ENCODE measurements at regions of chr14 and their contacts with region 1.

Region 1: GRCh38 chr14:99235582-99236320 is 36.2 kb downstream of the BCL11B start:
- DNase-seq: no peak
- ATAC-seq: no peak
- H3K4me3 Mint-ChIP-seq: peak overlapping the region; percentile 67
- H3K27ac Mint-ChIP-seq: peak overlapping the region; percentile 93
- H3K4me1 Mint-ChIP-seq: peaks cover 93% of the 10 kb centered on the region
- H3K27me3 Mint-ChIP-seq: no peaks in the 10 kb centered on the region

Region 2: DNA sequence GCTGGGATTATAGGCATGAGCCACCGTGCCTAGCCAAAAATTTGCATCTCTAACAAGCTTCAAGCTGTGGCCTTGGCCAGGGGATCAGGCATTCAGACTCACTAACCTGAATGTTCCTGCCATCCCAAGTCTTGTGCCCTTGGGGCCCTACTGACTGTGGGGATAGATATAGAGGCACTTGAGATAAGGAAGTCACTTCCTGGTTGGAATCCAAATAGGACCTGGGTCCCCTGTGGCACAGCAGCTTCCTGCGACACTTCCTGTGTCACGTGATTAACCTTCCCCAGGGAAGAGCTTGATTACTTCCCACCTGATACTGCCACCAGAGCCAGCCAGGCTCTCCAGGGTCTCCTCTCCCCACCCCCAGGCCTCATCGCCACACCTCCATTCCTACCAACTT is 92.0 kb before region 1 on chr14:
- CTCF ChIA-PET with region 1: no interaction called
- POLR2A ChIA-PET with region 1: no interaction called
- intact Hi-C with region 1: no loop called
- DNase-seq: no peak
- ATAC-seq: no peak
- H3K4me3 Mint-ChIP-seq: no peak overlapping the region
- H3K27ac Mint-ChIP-seq: no peak overlapping the region
- H3K4me1 Mint-ChIP-seq: peaks cover 5% of the 10 kb centered on the region
- H3K27me3 Mint-ChIP-seq: no peaks in the 10 kb centered on the region

Region 3: DNA sequence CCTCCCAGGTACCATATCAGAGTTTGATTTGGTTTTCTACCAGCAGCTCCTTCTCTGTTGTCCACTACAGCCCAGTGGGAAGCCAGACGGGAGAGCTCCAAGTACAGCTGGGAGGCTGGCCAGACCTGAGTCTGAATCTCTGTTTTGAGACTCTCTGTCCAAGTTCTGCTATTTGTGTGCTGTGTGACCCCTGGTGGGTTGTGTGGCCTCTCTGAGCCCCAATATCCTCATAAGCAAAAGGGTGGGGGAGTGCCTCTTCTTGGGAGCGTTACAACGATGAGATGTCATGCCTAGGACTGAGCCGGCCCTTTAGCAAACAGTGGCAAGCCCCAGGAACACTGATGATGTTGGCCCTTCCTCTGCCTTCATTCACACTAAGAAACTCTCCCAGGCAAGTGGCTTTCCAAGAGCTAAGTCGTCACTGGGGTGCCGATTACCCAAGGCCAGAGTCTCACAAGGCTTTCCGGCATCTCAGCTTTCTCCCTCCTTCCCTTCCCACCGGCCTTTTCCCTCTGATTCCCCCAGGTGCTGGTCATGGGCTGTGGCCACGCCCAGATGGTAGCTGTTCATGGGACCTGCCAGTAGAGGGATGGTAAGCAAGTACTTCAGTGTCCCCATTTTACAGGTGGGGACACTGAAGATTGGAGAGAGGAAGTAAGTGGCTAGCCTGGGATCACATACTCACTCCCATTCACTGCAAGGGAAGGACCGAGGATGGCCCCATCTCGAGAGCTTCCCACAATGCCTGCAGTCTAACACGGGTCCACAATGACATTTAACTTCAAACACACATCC is 11.4 kb before region 1 on chr14:
- CTCF ChIA-PET with region 1: interaction called, 18 read pairs
- POLR2A ChIA-PET with region 1: interaction called, 4 read pairs
- intact Hi-C with region 1: no loop called
- DNase-seq: no peak
- ATAC-seq: peak; percentile 19
- H3K4me3 Mint-ChIP-seq: peak overlapping the region; percentile 43
- H3K27ac Mint-ChIP-seq: peak overlapping the region; percentile 88
- H3K4me1 Mint-ChIP-seq: peaks cover 95% of the 10 kb centered on the region
- H3K27me3 Mint-ChIP-seq: no peaks in the 10 kb centered on the region

Measured in activated CD4-positive, alpha-beta T cell treated with anti-CD3 and anti-CD28 coated beads for 36 hours (primary cell).